ENCODE measurements at regions of chr17 and their contacts with region 1.

Region 1: DNA sequence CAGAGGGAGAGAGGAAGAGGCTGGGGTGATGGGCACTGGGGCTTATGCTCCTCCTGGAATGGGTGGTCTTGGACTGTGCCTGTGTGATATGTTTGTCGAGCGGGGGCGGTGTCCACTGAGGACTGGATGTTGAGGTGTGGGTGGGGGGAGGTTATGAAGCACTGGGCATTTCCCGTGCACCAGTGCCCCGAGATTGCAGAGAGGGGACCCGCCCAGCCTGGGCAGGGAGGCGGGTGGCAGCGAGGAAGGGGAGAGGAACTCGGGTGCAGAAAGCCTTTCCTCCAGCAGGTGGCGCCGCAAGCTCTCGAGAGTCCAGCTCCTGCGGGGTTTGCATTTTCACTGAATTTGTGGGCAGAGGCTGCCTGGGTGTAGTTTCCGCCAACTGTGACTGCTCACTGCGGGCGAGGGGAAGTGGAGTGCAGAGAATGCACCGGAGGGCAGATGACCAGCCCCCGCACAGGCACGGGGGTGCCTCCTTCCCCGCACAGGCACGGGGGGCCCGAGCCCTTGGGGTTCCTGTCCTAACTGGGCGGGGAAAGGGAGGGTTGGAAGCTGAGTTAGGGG is 190.6 kb downstream of the SEC14L1 start:
- DNase-seq: peak; percentile 95
- H3K4me3 ChIP-seq: peak overlapping the region in 1 of 4 donors; percentile 35
- H3K27ac ChIP-seq: peak overlapping the region; percentile 59 to 81 (median 73)
- H3K4me1 ChIP-seq: peaks cover 0 to 46% (median 36%) of the 10 kb centered on the region in 4 donors
- H3K27me3 ChIP-seq: no peaks in the 10 kb centered on the region
- CTCF ChIP-seq: peak; percentile 92 to 98 (median 96)
- EP300 ChIP-seq: no peak
- POLR2A ChIP-seq: no peak

Region 2: GRCh38 chr17:77247048-77247541 is 84.3 kb before region 1 on chr17:
- in situ Hi-C with region 1: no loop called
- intact Hi-C with region 1: no loop called
- DNase-seq: peak; percentile 88
- H3K4me3 ChIP-seq: peak overlapping the region; percentile 37 to 54 (median 46)
- H3K27ac ChIP-seq: peak overlapping the region in 2 of 4 donors; percentile 42 to 60
- H3K4me1 ChIP-seq: peaks cover 6 to 11% (median 10%) of the 10 kb centered on the region in 4 donors
- H3K27me3 ChIP-seq: peaks cover 30% of the 10 kb centered on the region
- CTCF ChIP-seq: peak; percentile 95 to 99 (median 99)
- EP300 ChIP-seq: no peak
- POLR2A ChIP-seq: no peak

Region 3: GRCh38 chr17:77429919-77430752 is 98.8 kb after region 1 on chr17:
- in situ Hi-C with region 1: loop called in 2 of 4 experiments (anchors 10 to 25 kb)
- intact Hi-C with region 1: loop called (anchors 5 kb)
- DNase-seq: peak; percentile 91
- H3K4me3 ChIP-seq: no peak overlapping the region
- H3K27ac ChIP-seq: peak overlapping the region; percentile 89 to 95 (median 94)
- H3K4me1 ChIP-seq: peaks cover 62 to 82% (median 69%) of the 10 kb centered on the region in 4 donors
- H3K27me3 ChIP-seq: no peaks in the 10 kb centered on the region
- CTCF ChIP-seq: peak; percentile 73 to 91 (median 77)
- EP300 ChIP-seq: peak; percentile 65
- POLR2A ChIP-seq: no peak